ENCODE measurements at regions of chr2 and their contacts with region 1.

Region 1: DNA sequence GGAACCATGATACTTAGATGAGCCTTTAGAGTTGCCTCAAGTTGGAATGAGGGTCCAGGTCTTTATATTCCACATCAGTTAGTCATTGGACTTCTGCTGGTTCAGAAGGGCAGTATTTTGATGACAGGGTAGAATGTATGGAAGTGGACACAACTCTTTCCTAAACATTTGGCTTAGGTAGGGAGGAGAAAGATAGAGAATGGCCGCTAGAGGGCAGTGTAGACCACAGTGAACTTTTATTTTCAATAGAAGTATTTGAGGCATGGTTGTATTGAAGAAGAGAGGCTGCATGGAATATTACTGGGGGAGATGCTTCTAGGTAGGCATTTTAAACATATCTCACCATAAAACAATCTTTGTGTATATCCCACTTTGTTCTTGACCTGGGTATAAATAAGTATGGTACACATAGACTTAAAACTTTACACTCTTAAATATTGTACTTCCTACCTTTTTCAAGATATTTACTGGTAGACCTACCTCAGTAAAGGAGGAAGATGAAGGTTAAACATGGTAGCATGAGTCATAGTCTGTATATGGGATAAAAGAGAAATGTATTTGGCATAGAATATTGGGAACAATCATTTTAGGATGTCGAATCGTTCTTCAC is 497.6 kb upstream of the FAM98A start:
- DNase-seq: peak; percentile 75
- H3K4me3 Mint-ChIP-seq: no peak overlapping the region
- H3K27ac Mint-ChIP-seq: no peak overlapping the region
- H3K4me1 Mint-ChIP-seq: peaks cover 5% of the 10 kb centered on the region
- H3K27me3 Mint-ChIP-seq: no peaks in the 10 kb centered on the region
- CTCF ChIP-seq: peak; percentile 71

Region 2: DNA sequence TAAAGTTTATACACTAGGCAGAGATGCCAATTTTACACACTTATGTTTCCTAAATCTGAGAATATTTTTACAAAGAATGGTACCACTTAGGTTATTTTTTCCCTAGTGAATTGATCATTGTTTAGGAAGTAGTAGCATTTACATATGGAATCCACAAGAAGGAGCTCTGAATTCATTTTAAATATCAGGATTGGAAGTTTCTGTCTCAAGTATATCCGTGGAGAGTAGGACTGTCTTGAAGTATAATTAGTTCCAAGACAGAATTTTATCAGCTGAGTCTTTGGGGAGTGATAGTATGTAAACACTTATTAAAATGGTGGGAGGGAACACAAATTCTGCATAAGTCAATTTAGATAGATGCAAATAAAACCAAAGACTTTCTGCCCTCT is 415.3 kb before region 1 on chr2:
- CTCF ChIA-PET with region 1: interaction called, 10 read pairs
- POLR2A ChIA-PET with region 1: no interaction called
- intact Hi-C with region 1: loop called (anchors 5 kb)
- DNase-seq: no peak
- H3K4me3 Mint-ChIP-seq: no peak overlapping the region
- H3K27ac Mint-ChIP-seq: no peak overlapping the region
- H3K4me1 Mint-ChIP-seq: no peaks in the 10 kb centered on the region
- H3K27me3 Mint-ChIP-seq: no peaks in the 10 kb centered on the region
- CTCF ChIP-seq: peak; percentile 57

Region 3: DNA sequence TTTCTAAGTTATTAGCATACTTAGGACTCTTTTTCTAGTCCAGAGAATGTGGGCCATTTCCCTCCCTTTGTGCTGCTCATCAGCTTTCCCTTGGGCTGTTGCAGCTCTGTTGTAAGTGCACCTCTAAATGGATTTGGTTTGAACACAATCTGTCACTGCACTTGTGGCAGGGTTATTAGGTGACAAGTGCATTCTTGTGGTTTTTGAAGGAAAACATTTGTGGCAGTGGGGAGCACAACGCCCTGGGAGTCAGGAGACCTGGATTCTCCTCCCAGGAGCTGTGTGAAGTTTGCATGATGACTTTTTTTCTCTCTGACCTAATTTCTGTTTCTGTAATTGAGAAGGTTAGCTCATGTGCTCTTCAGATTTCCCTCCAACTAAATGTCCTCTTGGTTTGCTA is 133.3 kb after region 1 on chr2:
- CTCF ChIA-PET with region 1: no interaction called
- POLR2A ChIA-PET with region 1: no interaction called
- intact Hi-C with region 1: no loop called
- DNase-seq: no peak
- H3K4me3 Mint-ChIP-seq: no peak overlapping the region
- H3K27ac Mint-ChIP-seq: no peak overlapping the region
- H3K4me1 Mint-ChIP-seq: peaks cover 8% of the 10 kb centered on the region
- H3K27me3 Mint-ChIP-seq: no peaks in the 10 kb centered on the region
- CTCF ChIP-seq: no peak

Region 4: DNA sequence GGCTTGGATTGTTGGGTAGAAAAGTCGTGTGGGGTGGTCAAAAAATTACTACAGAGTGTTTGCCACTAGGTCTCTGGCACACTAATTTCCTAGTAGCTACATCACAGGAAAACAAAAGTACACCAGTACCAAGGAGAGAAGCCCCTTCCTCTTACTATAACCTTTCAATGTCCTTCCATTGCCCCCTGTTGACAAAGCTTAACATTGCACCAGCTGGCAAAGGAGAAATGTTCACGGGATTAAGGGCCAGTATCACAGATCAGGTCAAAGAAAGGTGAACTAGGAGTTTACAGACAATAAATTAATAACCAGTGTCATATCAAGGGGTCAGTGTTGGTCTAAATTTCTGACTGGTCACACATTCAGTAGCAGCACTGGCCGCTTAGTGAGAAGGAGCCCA is 642.0 kb after region 1 on chr2:
- CTCF ChIA-PET with region 1: interaction called, 4 read pairs
- POLR2A ChIA-PET with region 1: no interaction called
- intact Hi-C with region 1: loop called (anchors 1 kb)
- DNase-seq: no peak
- H3K4me3 Mint-ChIP-seq: no peak overlapping the region
- H3K27ac Mint-ChIP-seq: no peak overlapping the region
- H3K4me1 Mint-ChIP-seq: no peaks in the 10 kb centered on the region
- H3K27me3 Mint-ChIP-seq: peaks cover 11% of the 10 kb centered on the region
- CTCF ChIP-seq: peak; percentile 11

Region 5: GRCh38 chr2:35114765-35115164 is 1018.1 kb after region 1 on chr2:
- CTCF ChIA-PET with region 1: no interaction called
- POLR2A ChIA-PET with region 1: no interaction called
- intact Hi-C with region 1: loop called (anchors 2 kb)
- DNase-seq: peak; percentile 29
- H3K4me3 Mint-ChIP-seq: no peak overlapping the region
- H3K27ac Mint-ChIP-seq: no peak overlapping the region
- H3K4me1 Mint-ChIP-seq: no peaks in the 10 kb centered on the region
- H3K27me3 Mint-ChIP-seq: peaks cover 31% of the 10 kb centered on the region
- CTCF ChIP-seq: peak; percentile 28

Region 6: GRCh38 chr2:35168354-35168753 is 1071.7 kb after region 1 on chr2:
- CTCF ChIA-PET with region 1: no interaction called
- POLR2A ChIA-PET with region 1: no interaction called
- intact Hi-C with region 1: loop called (anchors 2 kb)
- DNase-seq: peak; percentile 9
- H3K4me3 Mint-ChIP-seq: no peak overlapping the region
- H3K27ac Mint-ChIP-seq: no peak overlapping the region
- H3K4me1 Mint-ChIP-seq: no peaks in the 10 kb centered on the region
- H3K27me3 Mint-ChIP-seq: peaks cover 69% of the 10 kb centered on the region
- CTCF ChIP-seq: peak; percentile 31